Transverse colon (tissue), 4 donors: ENCODE measurements at regions of chr1 and their contacts with region 1.

Region 1: DNA sequence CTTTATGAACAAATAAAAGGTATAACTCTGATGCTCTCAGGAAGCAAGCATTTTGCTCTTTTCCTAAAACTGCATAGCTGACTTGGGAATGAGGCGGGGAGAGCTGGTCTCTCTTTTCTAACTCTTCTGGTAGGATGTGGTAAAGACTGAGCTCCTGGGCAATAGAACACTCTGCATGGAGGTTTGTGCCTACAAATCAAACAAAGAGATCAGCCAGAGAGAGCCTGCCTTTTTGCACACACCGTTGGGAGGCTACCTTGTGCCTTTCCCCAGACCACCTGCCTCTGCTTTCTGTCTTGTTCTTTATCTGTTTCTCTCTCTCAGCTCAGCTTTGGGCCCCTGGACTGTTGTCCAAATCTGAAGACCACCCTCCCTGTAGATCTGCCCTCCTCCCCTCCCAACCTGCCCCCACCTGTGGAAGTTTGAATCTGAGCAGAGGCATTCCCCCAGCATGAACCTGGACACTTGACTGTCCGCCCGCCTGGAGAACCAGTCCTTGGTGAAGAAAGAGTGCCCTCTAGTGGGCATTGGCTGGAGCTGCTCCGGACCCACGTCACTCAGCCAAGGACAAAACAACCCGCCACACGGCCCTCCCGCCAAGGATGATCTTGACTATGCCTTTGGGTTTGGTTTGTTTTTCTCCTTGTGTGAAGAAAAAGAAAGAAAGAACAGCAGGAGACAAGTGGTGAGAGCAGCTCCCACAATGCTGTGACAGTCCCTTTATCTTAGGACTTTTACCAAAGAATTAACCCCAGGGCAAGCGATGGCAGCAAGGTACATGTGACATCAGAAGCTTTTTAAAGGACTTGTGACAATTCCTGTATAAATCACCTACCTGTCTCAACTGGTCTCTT is 228.2 kb downstream of the PBX1 start:
- DNase-seq: peak; percentile 85
- H3K4me3 ChIP-seq: no peak overlapping the region
- H3K27ac ChIP-seq: peak overlapping the region; percentile 17 to 72 (median 57)
- H3K4me1 ChIP-seq: peaks cover 15 to 47% (median 26%) of the 10 kb centered on the region in 4 donors
- H3K27me3 ChIP-seq: no peaks in the 10 kb centered on the region
- CTCF ChIP-seq: peak; percentile 87 to 93 (median 92)
- EP300 ChIP-seq: no peak
- POLR2A ChIP-seq: no peak

Region 2: DNA sequence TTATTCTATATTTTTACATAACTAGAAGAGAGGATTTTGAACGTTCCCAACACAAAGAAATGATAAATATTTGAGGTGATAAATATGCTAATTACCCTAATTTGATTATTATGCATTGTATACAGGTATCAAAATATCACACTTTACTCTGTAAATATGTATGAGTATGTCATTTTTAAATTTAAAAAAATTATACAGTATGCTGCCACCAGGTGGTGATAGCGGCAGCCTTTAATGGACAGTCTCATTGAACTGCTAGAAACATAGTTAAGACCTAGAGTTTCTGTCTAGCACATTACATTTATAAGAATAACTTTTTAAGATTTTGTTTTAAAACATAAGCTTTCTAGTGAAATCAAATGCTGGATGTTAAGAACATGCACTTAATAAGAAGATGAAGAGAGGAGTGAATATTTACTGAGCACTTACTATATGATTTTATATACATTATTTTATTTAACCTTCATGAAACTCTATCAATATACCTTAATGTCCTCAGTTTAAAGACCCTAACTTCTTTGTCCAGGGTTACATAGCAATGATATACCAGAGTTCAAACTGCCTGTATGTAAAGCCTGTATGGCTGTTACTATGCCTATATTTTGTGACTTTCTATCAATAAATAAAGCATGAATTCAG is 1258.4 kb before region 1 on chr1:
- in situ Hi-C with region 1: loop called in 1 of 4 experiments (anchors 25 kb)
- intact Hi-C with region 1: no loop called
- DNase-seq: peak; percentile 16
- H3K4me3 ChIP-seq: no peak overlapping the region
- H3K27ac ChIP-seq: no peak overlapping the region
- H3K4me1 ChIP-seq: no peaks in the 10 kb centered on the region
- H3K27me3 ChIP-seq: no peaks in the 10 kb centered on the region
- CTCF ChIP-seq: peak; percentile 52 to 64 (median 58)
- EP300 ChIP-seq: no peak
- POLR2A ChIP-seq: no peak

Region 3: GRCh38 chr1:164155347-164155746 is 631.9 kb before region 1 on chr1:
- in situ Hi-C with region 1: loop called in 2 of 4 experiments (anchors 10 to 25 kb)
- intact Hi-C with region 1: no loop called
- DNase-seq: no peak
- H3K4me3 ChIP-seq: no peak overlapping the region
- H3K27ac ChIP-seq: no peak overlapping the region
- H3K4me1 ChIP-seq: no peaks in the 10 kb centered on the region
- H3K27me3 ChIP-seq: no peaks in the 10 kb centered on the region
- CTCF ChIP-seq: no peak
- EP300 ChIP-seq: no peak
- POLR2A ChIP-seq: no peak

Region 4: GRCh38 chr1:164558461-164559341 is 228.5 kb before region 1 on chr1 and contains the start of gene PBX1:
- in situ Hi-C with region 1: loop called in 2 of 4 experiments (anchors 10 kb)
- intact Hi-C with region 1: loop called (anchors 5 kb)
- DNase-seq: peak; percentile 97
- H3K4me3 ChIP-seq: peak within 1 kb of the TSS; percentile 43 to 90 (median 72)
- H3K27ac ChIP-seq: peak within 1 kb of the TSS; percentile 87 to 89 (median 87)
- H3K4me1 ChIP-seq: peaks cover 0 to 19% (median 1%) of the 10 kb centered on the region in 4 donors
- H3K27me3 ChIP-seq: no peaks in the 10 kb centered on the region
- CTCF ChIP-seq: no peak
- EP300 ChIP-seq: no peak
- POLR2A ChIP-seq: peak; percentile 80
- total RNA-seq, gene PBX1: 46.8 to 77.2 (median 50.7) TPM

Region 5: GRCh38 chr1:164637461-164638375 is 149.5 kb before region 1 on chr1:
- in situ Hi-C with region 1: loop called in 1 of 4 experiments (anchors 25 kb)
- intact Hi-C with region 1: no loop called
- DNase-seq: no peak
- H3K4me3 ChIP-seq: no peak overlapping the region
- H3K27ac ChIP-seq: peak overlapping the region; percentile 63 to 76 (median 66)
- H3K4me1 ChIP-seq: peaks cover 14 to 67% (median 30%) of the 10 kb centered on the region in 4 donors
- H3K27me3 ChIP-seq: no peaks in the 10 kb centered on the region
- CTCF ChIP-seq: no peak
- EP300 ChIP-seq: no peak
- POLR2A ChIP-seq: no peak

Region 6: DNA sequence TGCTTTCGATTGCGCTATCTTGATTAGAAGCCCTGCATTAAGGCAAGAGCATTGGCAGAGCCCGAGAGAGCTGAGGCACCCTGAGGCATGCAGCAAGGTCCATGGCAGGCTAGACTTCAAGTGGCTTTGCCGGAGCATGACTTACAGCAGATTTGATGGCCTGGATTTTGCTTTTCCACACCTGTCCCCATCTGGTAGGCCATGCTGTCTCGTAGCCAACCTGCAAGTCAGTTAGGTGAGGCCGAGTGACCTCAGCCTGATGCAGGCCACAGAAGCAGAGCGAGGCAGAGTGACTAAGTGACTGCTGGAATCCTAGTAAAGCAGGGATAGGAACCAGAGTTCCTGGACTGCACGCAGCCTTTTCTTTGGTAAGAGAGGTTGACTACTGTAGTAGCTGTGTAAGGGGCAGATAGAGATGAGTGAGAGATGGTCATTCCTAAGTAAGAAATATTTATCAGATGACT is 79.3 kb before region 1 on chr1:
- in situ Hi-C with region 1: no loop called
- intact Hi-C with region 1: loop called (anchors 10 kb)
- DNase-seq: no peak
- H3K4me3 ChIP-seq: no peak overlapping the region
- H3K27ac ChIP-seq: peak overlapping the region; percentile 74 to 86 (median 78)
- H3K4me1 ChIP-seq: peaks cover 44 to 88% (median 56%) of the 10 kb centered on the region in 4 donors
- H3K27me3 ChIP-seq: no peaks in the 10 kb centered on the region
- CTCF ChIP-seq: no peak
- EP300 ChIP-seq: no peak
- POLR2A ChIP-seq: no peak

Region 7: DNA sequence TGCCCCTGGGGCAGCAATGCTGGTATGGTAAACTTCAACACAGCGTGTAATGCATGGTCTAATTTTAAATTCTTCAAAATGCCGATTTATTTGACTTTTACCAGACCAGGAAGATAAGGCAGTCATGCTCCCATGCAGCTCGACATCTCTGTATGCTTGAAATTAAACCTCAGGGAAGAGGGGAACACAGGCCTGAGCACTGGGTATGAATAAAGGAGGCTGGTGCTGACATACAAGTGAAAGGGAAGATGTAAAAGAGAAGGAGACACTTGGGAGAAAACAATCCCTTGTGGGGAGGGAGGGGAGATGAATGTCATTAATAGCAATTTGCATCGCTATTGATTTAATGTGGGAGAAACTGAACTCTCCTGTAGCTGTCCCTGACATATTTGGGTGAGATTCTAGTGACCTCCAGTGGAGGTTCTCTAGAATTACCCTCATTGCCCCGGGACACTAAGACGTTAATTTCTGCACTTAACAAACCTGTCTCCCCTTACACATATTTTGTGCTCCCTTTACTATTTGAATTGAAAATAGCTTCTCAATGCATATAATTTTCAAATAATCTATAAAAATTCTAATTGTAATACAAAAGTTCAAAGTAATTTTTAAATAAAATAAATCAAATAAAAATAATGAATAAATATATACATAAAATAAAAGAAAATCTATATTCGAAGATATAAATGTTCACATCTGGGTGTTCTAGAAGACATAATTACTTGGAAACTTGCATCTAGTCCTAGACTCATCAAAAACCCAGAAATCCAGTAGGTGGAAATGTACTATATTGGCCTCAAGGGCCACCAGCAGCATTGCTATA is 286.2 kb after region 1 on chr1:
- in situ Hi-C with region 1: loop called in 1 of 4 experiments (anchors 25 kb)
- intact Hi-C with region 1: no loop called
- DNase-seq: no peak
- H3K4me3 ChIP-seq: no peak overlapping the region
- H3K27ac ChIP-seq: no peak overlapping the region
- H3K4me1 ChIP-seq: peaks cover 0 to 27% (median 13%) of the 10 kb centered on the region in 4 donors
- H3K27me3 ChIP-seq: no peaks in the 10 kb centered on the region
- CTCF ChIP-seq: peak; percentile 68 to 82 (median 76)
- EP300 ChIP-seq: no peak
- POLR2A ChIP-seq: no peak